Breast epithelium (tissue), 4 donors: ENCODE measurements at regions of chr12 and their contacts with region 1.

Region 1: DNA sequence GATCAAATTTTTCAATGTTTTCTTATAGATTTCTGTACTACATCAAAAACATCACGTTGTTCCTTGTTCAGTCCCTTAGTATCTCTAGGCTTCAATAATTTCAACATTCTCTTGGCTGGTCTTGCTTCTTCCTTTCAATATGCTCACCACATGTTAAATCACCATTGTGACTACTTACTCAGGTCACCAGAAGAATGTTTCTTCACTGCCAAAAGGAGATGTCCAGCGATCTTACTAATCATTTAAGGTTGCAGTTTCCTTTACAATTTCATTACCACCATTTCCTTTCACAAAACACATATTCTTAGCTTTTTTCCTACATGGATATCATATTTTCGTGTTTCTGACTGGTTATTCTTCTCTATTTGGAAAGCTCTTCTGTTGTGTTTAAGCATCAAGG is 363.8 kb downstream of the NAV3 start:
- DNase-seq: no peak
- H3K4me3 ChIP-seq: no peak overlapping the region
- H3K27ac ChIP-seq: no peak overlapping the region
- H3K4me1 ChIP-seq: no peaks in the 10 kb centered on the region
- H3K27me3 ChIP-seq: no peaks in the 10 kb centered on the region
- CTCF ChIP-seq: no peak
- POLR2A ChIP-seq: no peak

Region 2: DNA sequence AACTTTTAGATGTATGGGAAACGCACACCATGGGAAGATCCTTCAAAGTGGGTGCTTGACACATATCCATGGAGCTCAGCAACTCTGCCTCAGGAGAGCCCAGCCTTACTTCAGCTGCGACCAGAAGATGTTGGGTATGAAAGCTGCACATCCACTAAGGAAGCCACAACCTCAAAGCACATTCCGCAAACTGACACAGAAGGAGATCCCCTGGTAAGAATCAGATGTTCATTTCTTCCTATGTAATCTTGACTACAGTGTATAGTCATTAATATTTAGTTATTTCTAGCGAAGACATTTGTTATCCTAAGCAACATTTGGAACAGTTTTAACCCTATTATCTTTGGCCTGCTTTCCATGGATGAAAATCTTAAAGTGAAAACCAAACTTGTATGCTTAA is 10.5 kb after region 1 on chr12:
- intact Hi-C with region 1: loop called (anchors 1 kb)
- DNase-seq: no peak
- H3K4me3 ChIP-seq: no peak overlapping the region
- H3K27ac ChIP-seq: no peak overlapping the region
- H3K4me1 ChIP-seq: no peaks in the 10 kb centered on the region
- H3K27me3 ChIP-seq: no peaks in the 10 kb centered on the region
- CTCF ChIP-seq: no peak
- POLR2A ChIP-seq: no peak